CD8-positive, alpha-beta memory T cell (primary cell): ENCODE measurements at regions of chr10 and their contacts with region 1.

Region 1: GRCh38 chr10:70363971-70364771 is 18.3 kb downstream of the LRRC20 start:
- DNase-seq: peak; percentile 75 to 89 (median 76)
- H3K4me3 ChIP-seq: no peak overlapping the region
- H3K4me3 Mint-ChIP-seq: peak overlapping the region in 4 of 7 donors; percentile 32 to 59 (median 51)
- H3K27ac ChIP-seq: no peak overlapping the region
- H3K27ac Mint-ChIP-seq: peak overlapping the region in 4 of 8 donors; percentile 23 to 88 (median 60)
- H3K4me1 ChIP-seq: peaks cover 8% of the 10 kb centered on the region
- H3K4me1 Mint-ChIP-seq: peaks cover 8 to 11% (median 9%) of the 10 kb centered on the region in 3 donors
- H3K27me3 ChIP-seq: no peaks in the 10 kb centered on the region
- H3K27me3 Mint-ChIP-seq: no peaks in the 10 kb centered on the region

Region 2: DNA sequence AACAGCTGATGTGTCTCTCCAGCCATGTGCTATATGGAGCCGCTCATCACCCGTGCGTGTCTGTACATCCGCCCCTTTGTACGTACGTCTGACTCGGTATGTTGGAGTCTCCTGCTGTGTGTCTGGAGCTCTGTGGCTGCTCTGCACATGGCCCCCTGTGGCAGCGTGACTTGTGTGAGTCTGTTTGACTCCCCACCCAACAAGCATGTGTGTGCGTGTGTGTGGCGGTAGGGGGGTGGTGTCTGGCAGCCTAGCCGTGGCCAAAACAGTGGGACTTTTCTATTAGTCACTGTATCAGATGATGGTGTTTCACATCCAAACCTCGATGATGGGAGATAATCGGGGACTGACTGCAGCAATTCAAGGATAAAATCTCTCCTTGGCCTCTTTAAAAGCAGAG is 468.4 kb before region 1 on chr10:
- CTCF ChIA-PET with region 1: no interaction called
- POLR2A ChIA-PET with region 1: no interaction called
- DNase-seq: no peak
- H3K4me3 ChIP-seq: no peak overlapping the region
- H3K4me3 Mint-ChIP-seq: no peak overlapping the region
- H3K27ac ChIP-seq: no peak overlapping the region
- H3K27ac Mint-ChIP-seq: no peak overlapping the region
- H3K4me1 ChIP-seq: no peaks in the 10 kb centered on the region
- H3K4me1 Mint-ChIP-seq: no peaks in the 10 kb centered on the region
- H3K27me3 ChIP-seq: no peaks in the 10 kb centered on the region
- H3K27me3 Mint-ChIP-seq: peaks cover 7 to 9% of the 10 kb centered on the region in 2 donors

Region 3: GRCh38 chr10:70084189-70084588 is 280.0 kb before region 1 on chr10:
- CTCF ChIA-PET with region 1: interaction called, 14 read pairs
- POLR2A ChIA-PET with region 1: no interaction called
- DNase-seq: peak in 1 of 5 donors; percentile 21
- H3K4me3 ChIP-seq: no peak overlapping the region
- H3K4me3 Mint-ChIP-seq: no peak overlapping the region
- H3K27ac ChIP-seq: no peak overlapping the region
- H3K27ac Mint-ChIP-seq: no peak overlapping the region
- H3K4me1 ChIP-seq: no peaks in the 10 kb centered on the region
- H3K4me1 Mint-ChIP-seq: no peaks in the 10 kb centered on the region
- H3K27me3 ChIP-seq: no peaks in the 10 kb centered on the region
- H3K27me3 Mint-ChIP-seq: peaks cover 0 to 3% of the 10 kb centered on the region in 2 donors

Region 4: DNA sequence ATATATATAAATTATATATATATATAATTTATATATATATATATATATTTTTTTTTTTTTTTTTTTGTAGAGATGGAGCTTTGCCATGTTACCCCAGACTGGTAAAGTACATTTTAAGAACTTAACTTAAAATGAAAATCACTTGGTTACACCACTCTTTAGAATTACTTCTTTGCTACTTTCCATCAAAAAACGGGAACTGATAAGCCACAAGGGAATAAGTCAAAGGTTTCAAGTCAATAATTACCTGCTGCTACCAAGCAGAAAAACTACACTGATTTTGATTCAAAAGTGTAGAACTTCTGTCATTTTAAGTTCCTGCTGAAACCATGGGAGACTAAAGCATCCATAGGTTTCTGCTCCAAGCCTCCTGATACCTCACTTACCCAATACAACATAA is 143.1 kb before region 1 on chr10:
- CTCF ChIA-PET with region 1: interaction called, 304 read pairs
- POLR2A ChIA-PET with region 1: interaction called, 15 read pairs
- DNase-seq: no peak
- H3K4me3 ChIP-seq: no peak overlapping the region
- H3K4me3 Mint-ChIP-seq: peak overlapping the region in 1 of 7 donors; percentile 64
- H3K27ac ChIP-seq: no peak overlapping the region
- H3K27ac Mint-ChIP-seq: peak overlapping the region in 6 of 8 donors; percentile 13 to 81 (median 69)
- H3K4me1 ChIP-seq: peaks cover 4% of the 10 kb centered on the region
- H3K4me1 Mint-ChIP-seq: peaks cover 13 to 18% (median 18%) of the 10 kb centered on the region in 3 donors
- H3K27me3 ChIP-seq: no peaks in the 10 kb centered on the region
- H3K27me3 Mint-ChIP-seq: no peaks in the 10 kb centered on the region

Region 5: DNA sequence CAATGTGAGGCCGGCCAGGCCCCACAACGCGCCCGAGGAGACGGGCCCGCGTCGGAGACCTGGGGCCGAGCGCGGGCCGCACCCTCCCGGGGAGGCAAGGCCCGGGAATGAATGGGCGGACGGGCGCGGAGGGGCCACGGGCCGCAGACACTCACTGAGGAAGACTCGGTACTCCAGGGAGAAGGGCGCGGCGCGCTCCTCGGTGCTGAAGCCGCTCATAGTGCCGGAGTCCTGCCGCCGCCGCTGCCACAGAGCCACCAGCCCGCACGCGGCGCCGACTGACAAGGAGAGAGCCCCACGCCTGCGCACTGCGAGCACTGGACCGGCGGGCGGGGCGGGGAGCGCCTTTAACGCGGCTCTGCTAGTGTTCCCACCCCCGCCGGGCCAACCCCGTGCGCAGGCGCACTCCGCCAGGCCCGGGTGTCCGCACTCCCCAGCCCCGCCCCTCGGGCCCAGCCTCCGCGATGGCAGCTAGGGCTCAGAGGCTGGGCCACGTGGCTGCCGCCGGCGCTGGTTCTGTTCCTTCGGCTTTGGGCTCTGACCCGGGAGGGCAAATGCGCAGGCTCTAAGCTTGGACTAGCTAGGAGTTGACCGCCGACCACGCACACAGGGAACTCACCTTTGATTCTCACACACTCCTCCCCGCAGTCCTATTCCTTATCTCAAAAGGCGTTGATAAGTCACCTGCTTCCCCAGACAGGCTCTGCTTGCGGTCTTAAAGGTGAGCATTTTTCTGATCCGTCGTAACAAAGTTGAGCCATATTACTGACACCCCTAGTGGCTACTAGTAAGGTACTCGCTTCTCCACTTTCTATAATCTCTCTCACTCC is 130.8 kb before region 1 on chr10 and contains the start of gene PPA1:
- CTCF ChIA-PET with region 1: interaction called, 304 read pairs
- POLR2A ChIA-PET with region 1: no interaction called
- DNase-seq: peak; percentile 99
- H3K4me3 ChIP-seq: peak within 1 kb of the TSS; percentile 93
- H3K4me3 Mint-ChIP-seq: peak within 1 kb of the TSS; percentile 82 to 96 (median 88)
- H3K27ac ChIP-seq: peak within 1 kb of the TSS; percentile 75
- H3K27ac Mint-ChIP-seq: peak within 1 kb of the TSS; percentile 84 to 98 (median 94)
- H3K4me1 ChIP-seq: peaks cover 11% of the 10 kb centered on the region
- H3K4me1 Mint-ChIP-seq: peaks cover 17 to 33% (median 32%) of the 10 kb centered on the region in 3 donors
- H3K27me3 ChIP-seq: no peaks in the 10 kb centered on the region
- H3K27me3 Mint-ChIP-seq: no peaks in the 10 kb centered on the region
- total RNA-seq, gene PPA1: 358 to 368 TPM

Region 6: GRCh38 chr10:70272925-70273316 is 91.2 kb before region 1 on chr10:
- CTCF ChIA-PET with region 1: interaction called, 24 read pairs
- POLR2A ChIA-PET with region 1: no interaction called
- DNase-seq: peak in 2 of 5 donors; percentile 25 to 29
- H3K4me3 ChIP-seq: no peak overlapping the region
- H3K4me3 Mint-ChIP-seq: peak overlapping the region in 4 of 7 donors; percentile 14 to 62 (median 50)
- H3K27ac ChIP-seq: no peak overlapping the region
- H3K27ac Mint-ChIP-seq: peak overlapping the region in 7 of 8 donors; percentile 7 to 61 (median 29)
- H3K4me1 ChIP-seq: no peaks in the 10 kb centered on the region
- H3K4me1 Mint-ChIP-seq: peaks cover 8 to 11% (median 10%) of the 10 kb centered on the region in 3 donors
- H3K27me3 ChIP-seq: no peaks in the 10 kb centered on the region
- H3K27me3 Mint-ChIP-seq: peaks cover 0 to 3% of the 10 kb centered on the region in 2 donors

Region 7: DNA sequence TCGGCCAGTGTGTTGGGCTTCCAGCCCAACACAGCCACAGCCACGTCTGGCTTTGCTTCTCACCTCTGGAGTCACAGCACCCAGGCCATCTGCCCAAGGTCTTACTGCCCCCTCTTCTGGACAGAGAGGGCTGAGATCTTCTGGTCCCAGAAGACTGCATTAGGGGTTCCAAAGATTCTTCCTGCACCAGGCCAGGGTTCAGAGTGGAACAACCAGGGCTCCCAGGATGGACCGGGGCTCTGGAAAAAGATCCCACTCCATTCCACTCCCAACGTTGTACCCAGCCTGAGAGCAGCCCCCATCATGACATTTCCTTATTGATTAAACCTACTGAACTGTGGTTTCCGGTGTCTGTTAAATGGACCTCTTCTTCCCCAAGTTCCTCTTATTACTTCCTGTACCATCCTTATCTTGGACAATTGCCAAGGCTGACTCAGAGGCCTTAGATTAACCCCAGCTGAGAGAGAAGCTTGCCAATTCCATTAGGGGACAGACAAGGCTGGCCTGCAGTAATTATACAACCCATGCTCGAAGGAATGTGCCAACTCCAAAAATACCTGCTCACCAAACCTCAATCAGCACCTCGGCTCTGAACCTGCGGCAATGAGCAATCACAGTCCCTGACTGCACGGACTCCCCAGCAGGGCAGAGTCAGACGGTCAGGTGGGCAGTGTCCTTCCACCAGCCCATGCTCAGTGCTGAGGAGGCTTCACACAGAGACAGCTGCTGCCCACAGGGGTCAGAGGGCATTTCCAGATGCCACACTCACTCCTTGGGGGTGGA is 32.5 kb before region 1 on chr10:
- CTCF ChIA-PET with region 1: interaction called, 10 read pairs
- POLR2A ChIA-PET with region 1: no interaction called
- DNase-seq: peak in 3 of 5 donors; percentile 3 to 54 (median 20)
- H3K4me3 ChIP-seq: no peak overlapping the region
- H3K4me3 Mint-ChIP-seq: peak overlapping the region in 4 of 7 donors; percentile 3 to 56 (median 18)
- H3K27ac ChIP-seq: no peak overlapping the region
- H3K27ac Mint-ChIP-seq: peak overlapping the region in 5 of 8 donors; percentile 7 to 55 (median 34)
- H3K4me1 ChIP-seq: peaks cover 17% of the 10 kb centered on the region
- H3K4me1 Mint-ChIP-seq: peaks cover 15 to 26% (median 15%) of the 10 kb centered on the region in 3 donors
- H3K27me3 ChIP-seq: no peaks in the 10 kb centered on the region
- H3K27me3 Mint-ChIP-seq: no peaks in the 10 kb centered on the region

Region 8: DNA sequence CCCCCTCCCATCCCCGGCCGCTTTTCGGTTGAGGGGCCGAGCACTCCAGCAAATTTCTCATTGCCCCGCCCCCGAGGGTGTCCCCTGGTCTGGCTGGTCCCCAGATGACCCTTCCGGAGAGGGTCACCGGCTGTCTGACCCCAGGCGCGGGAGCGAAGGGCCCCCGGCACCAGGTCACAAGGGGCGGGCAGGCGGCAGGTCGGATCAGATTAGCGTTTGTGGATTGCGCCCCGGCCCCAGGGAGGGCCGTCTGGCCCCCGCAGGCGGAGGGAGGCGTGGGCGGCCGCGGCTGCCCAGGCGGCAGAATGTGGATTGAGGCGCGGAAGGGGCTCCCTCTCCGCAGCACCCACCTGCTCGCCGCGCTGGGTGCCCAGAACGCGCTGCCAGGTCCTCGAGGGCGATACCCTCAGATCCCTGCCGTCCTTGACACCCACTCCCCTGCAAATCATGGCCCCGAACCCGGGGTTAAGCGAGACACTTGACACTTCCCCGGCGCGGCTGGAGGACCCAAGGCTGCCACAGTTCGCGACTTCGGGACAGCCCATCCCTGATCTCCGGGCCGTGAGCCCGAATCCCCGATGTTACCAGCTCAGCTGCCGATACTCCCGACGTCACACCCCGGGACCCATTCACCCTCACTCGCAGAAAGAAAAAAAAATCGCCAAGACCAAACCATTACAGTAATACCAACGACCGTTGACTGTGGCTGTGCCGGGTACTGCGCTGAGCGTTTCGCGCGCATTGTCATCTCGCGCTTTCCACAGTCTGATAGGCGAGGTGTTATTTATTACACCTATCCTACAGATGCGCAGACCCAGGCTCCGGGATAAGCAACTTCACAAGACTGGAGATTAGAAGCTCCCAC is 76.4 kb after region 1 on chr10:
- CTCF ChIA-PET with region 1: no interaction called
- POLR2A ChIA-PET with region 1: no interaction called
- DNase-seq: no peak
- H3K4me3 ChIP-seq: peak overlapping the region; percentile 34
- H3K4me3 Mint-ChIP-seq: peak overlapping the region in 6 of 7 donors; percentile 68 to 85 (median 73)
- H3K27ac ChIP-seq: no peak overlapping the region
- H3K27ac Mint-ChIP-seq: peak overlapping the region in 1 of 8 donors; percentile 65
- H3K4me1 ChIP-seq: peaks cover 17% of the 10 kb centered on the region
- H3K4me1 Mint-ChIP-seq: peaks cover 14 to 26% (median 16%) of the 10 kb centered on the region in 3 donors
- H3K27me3 ChIP-seq: peaks cover 26% of the 10 kb centered on the region
- H3K27me3 Mint-ChIP-seq: peaks cover 45% of the 10 kb centered on the region in 2 donors

Region 9: GRCh38 chr10:70481831-70482530 is 117.8 kb after region 1 on chr10:
- CTCF ChIA-PET with region 1: no interaction called
- POLR2A ChIA-PET with region 1: no interaction called
- DNase-seq: no peak
- H3K4me3 ChIP-seq: no peak overlapping the region
- H3K4me3 Mint-ChIP-seq: no peak overlapping the region
- H3K27ac ChIP-seq: no peak overlapping the region
- H3K27ac Mint-ChIP-seq: no peak overlapping the region
- H3K4me1 ChIP-seq: peaks cover 37% of the 10 kb centered on the region
- H3K4me1 Mint-ChIP-seq: peaks cover 26 to 40% (median 29%) of the 10 kb centered on the region in 3 donors
- H3K27me3 ChIP-seq: peaks cover 8% of the 10 kb centered on the region
- H3K27me3 Mint-ChIP-seq: peaks cover 4 to 24% of the 10 kb centered on the region in 2 donors